Naive thymus-derived CD4-positive, alpha-beta T cell (primary cell): ENCODE measurements at regions of chr5 and their contacts with region 1.

Region 1: DNA sequence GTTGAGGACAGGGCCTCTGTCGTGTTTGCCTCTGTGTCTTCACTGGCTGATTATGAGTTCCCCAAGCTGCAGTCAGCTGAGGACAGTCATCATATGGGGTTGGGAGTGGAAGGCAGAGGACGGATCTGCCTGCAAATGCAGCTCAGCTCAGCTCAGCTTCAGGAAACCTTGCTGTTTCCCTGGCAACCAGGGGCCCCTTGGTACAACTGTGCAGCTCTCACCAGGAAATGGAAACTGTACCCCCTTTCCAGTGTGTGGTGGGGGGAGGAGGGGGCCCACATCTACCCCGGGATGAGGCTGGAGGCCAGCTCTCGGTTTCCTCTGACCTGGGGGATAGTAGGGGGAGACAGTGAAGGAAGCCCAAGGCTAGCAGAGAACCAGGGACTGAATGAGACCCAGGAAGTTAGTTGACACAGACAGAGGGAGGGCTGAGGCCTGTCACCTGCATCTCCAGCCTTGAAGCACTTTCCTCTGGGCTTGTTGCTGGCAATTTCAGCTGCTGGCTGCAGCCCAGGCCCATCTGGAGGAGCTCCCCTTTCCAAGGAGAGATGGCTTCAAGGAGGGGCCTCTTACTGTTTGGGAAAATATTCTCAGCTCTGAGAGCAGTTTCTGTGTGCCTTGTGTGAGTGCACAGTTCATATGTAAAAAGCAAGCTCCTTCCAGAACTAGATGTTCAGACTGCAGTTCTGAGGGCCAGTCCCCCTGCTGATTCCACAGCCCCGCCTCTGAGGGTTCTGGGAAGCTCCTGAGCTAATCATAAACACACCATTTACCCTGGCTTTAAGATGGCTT is 6.9 kb downstream of the ANXA6 start:
- DNase-seq: peak; percentile 39 to 93 (median 83)
- ATAC-seq: peak; percentile 89
- H3K4me3 ChIP-seq: peak overlapping the region; percentile 44
- H3K4me3 Mint-ChIP-seq: peak overlapping the region; percentile 70 to 97 (median 86)
- H3K27ac ChIP-seq: peak overlapping the region; percentile 92
- H3K27ac Mint-ChIP-seq: peak overlapping the region; percentile 91 to 99 (median 97)
- H3K4me1 ChIP-seq: peaks cover 93 to 99% of the 10 kb centered on the region in 2 donors
- H3K4me1 Mint-ChIP-seq: peaks cover 80 to 100% (median 96%) of the 10 kb centered on the region in 7 donors
- H3K27me3 ChIP-seq: no peaks in the 10 kb centered on the region
- H3K27me3 Mint-ChIP-seq: no peaks in the 10 kb centered on the region

Region 2: GRCh38 chr5:150758531-150759333 is 391.9 kb before region 1 on chr5 and contains the start of gene DCTN4:
- CTCF ChIA-PET with region 1: no interaction called
- POLR2A ChIA-PET with region 1: no interaction called
- intact Hi-C with region 1: loop called in 1 of 2 experiments (anchors 2 kb)
- DNase-seq: peak; percentile 84 to 96 (median 94)
- ATAC-seq: peak; percentile 95
- H3K4me3 ChIP-seq: peak within 1 kb of the TSS; percentile 86
- H3K4me3 Mint-ChIP-seq: peak within 1 kb of the TSS in 3 of 10 donors; percentile 23 to 46 (median 36)
- H3K27ac ChIP-seq: peak within 1 kb of the TSS; percentile 96
- H3K27ac Mint-ChIP-seq: peak within 1 kb of the TSS in 1 of 9 donors; percentile 62
- H3K4me1 ChIP-seq: peaks cover 5 to 16% of the 10 kb centered on the region in 2 donors
- H3K4me1 Mint-ChIP-seq: peaks cover 22 to 54% (median 36%) of the 10 kb centered on the region in 7 donors
- H3K27me3 ChIP-seq: no peaks in the 10 kb centered on the region
- H3K27me3 Mint-ChIP-seq: peaks cover 0 to 5% (median 0%) of the 10 kb centered on the region in 5 donors
- total RNA-seq, gene DCTN4: 42.4 to 88.2 (median 46.9) TPM

Region 3: GRCh38 chr5:151086905-151087360 is 63.7 kb before region 1 on chr5:
- CTCF ChIA-PET with region 1: interaction called, 3 read pairs
- POLR2A ChIA-PET with region 1: no interaction called
- intact Hi-C with region 1: loop called in 1 of 2 experiments (anchors 1 kb)
- DNase-seq: peak in 8 of 9 donors; percentile 36 to 65 (median 44)
- ATAC-seq: peak; percentile 87
- H3K4me3 ChIP-seq: no peak overlapping the region
- H3K4me3 Mint-ChIP-seq: peak overlapping the region in 6 of 10 donors; percentile 0 to 84 (median 30)
- H3K27ac ChIP-seq: peak overlapping the region; percentile 39
- H3K27ac Mint-ChIP-seq: peak overlapping the region in 5 of 9 donors; percentile 5 to 72 (median 49)
- H3K4me1 ChIP-seq: peaks cover 20 to 47% of the 10 kb centered on the region in 2 donors
- H3K4me1 Mint-ChIP-seq: peaks cover 30 to 67% (median 53%) of the 10 kb centered on the region in 7 donors
- H3K27me3 ChIP-seq: no peaks in the 10 kb centered on the region
- H3K27me3 Mint-ChIP-seq: no peaks in the 10 kb centered on the region

Region 4: GRCh38 chr5:151126199-151126645 is 24.4 kb before region 1 on chr5:
- CTCF ChIA-PET with region 1: interaction called, 86 read pairs
- POLR2A ChIA-PET with region 1: interaction called, 760 read pairs
- intact Hi-C with region 1: loop called in 1 of 2 experiments (anchors 1 kb)
- DNase-seq: peak; percentile 41 to 71 (median 64)
- ATAC-seq: peak; percentile 73
- H3K4me3 ChIP-seq: no peak overlapping the region
- H3K4me3 Mint-ChIP-seq: peak overlapping the region in 9 of 10 donors; percentile 22 to 84 (median 54)
- H3K27ac ChIP-seq: peak overlapping the region; percentile 72
- H3K27ac Mint-ChIP-seq: peak overlapping the region; percentile 68 to 99 (median 91)
- H3K4me1 ChIP-seq: peaks cover under 1 to 27% of the 10 kb centered on the region in 2 donors
- H3K4me1 Mint-ChIP-seq: peaks cover 32 to 75% (median 57%) of the 10 kb centered on the region in 7 donors
- H3K27me3 ChIP-seq: no peaks in the 10 kb centered on the region
- H3K27me3 Mint-ChIP-seq: no peaks in the 10 kb centered on the region